HepG2 (cell line): ENCODE measurements at regions of chr11 and their contacts with region 1.

Region 1: GRCh38 chr11:44139565-44140330 is 44.3 kb downstream of the EXT2 start:
- DNase-seq: no peak
- ATAC-seq: no peak
- H3K4me3 ChIP-seq: no peak overlapping the region
- H3K27ac ChIP-seq: no peak overlapping the region
- H3K4me1 ChIP-seq: peaks cover 1% of the 10 kb centered on the region; the same call in 1 of the 2 replicates
- H3K27me3 ChIP-seq: no peaks in the 10 kb centered on the region
- CTCF ChIP-seq: no peak
- EP300 ChIP-seq: no peak
- POLR2A ChIP-seq: no peak
- RAD21 ChIP-seq: no peak

Region 2: GRCh38 chr11:44159848-44160721 is 20.3 kb after region 1 on chr11:
- CTCF ChIA-PET with region 1: no interaction called
- POLR2A ChIA-PET with region 1: no interaction called
- in situ Hi-C with region 1: no loop called
- intact Hi-C with region 1: no loop called
- DNase-seq: no peak
- ATAC-seq: no peak
- H3K4me3 ChIP-seq: no peak overlapping the region
- H3K27ac ChIP-seq: no peak overlapping the region
- H3K4me1 ChIP-seq: no peaks in the 10 kb centered on the region
- H3K27me3 ChIP-seq: no peaks in the 10 kb centered on the region
- CTCF ChIP-seq: no peak
- EP300 ChIP-seq: no peak
- POLR2A ChIP-seq: no peak
- RAD21 ChIP-seq: no peak

Region 3: DNA sequence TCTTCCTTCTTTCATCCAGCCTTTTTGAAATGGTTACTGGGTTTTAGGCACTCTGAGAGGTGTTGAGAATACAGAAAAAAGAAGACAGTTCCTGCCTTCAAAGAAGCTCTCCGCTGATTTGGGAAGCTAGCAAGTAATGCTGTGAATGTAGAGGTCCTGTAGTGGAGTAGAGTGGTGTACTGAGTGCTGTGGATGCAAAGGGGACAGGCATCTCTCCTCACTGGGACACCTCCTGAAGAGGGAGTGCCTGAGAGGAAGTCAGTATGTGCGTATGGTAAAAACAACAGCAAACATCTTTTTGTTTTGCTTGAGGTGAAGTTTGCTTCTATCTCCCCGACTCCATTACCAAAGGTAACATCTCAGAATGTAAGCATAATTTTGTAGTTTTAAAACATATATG is 33.2 kb after region 1 on chr11:
- CTCF ChIA-PET with region 1: no interaction called
- POLR2A ChIA-PET with region 1: no interaction called
- in situ Hi-C with region 1: no loop called
- intact Hi-C with region 1: loop called (anchors 2 kb)
- DNase-seq: no peak
- ATAC-seq: no peak
- H3K4me3 ChIP-seq: no peak overlapping the region
- H3K27ac ChIP-seq: no peak overlapping the region
- H3K4me1 ChIP-seq: no peaks in the 10 kb centered on the region
- H3K27me3 ChIP-seq: no peaks in the 10 kb centered on the region
- CTCF ChIP-seq: no peak
- EP300 ChIP-seq: no peak
- POLR2A ChIP-seq: no peak
- RAD21 ChIP-seq: no peak

Region 4: DNA sequence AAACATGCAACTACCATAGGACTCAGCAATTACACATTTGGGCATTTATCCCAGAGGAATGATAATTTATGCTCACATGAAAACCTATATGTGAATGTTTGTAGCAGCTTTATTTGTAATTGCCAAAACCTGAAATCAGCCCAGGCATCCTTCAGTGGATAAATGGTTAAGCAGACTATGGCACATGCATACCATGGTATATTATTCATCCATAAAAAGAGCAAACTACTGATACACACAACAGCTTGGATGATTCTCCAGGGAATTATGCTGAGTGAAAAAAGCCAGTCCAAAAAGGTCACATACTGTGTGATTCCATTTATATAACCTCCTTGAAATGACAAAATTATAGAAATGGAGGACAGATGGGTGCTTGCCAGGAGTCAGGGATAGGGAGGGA is 83.5 kb after region 1 on chr11:
- CTCF ChIA-PET with region 1: no interaction called
- POLR2A ChIA-PET with region 1: no interaction called
- in situ Hi-C with region 1: no loop called
- intact Hi-C with region 1: no loop called
- DNase-seq: no peak
- ATAC-seq: no peak
- H3K4me3 ChIP-seq: no peak overlapping the region
- H3K27ac ChIP-seq: no peak overlapping the region
- H3K4me1 ChIP-seq: no peaks in the 10 kb centered on the region
- H3K27me3 ChIP-seq: no peaks in the 10 kb centered on the region
- CTCF ChIP-seq: no peak
- EP300 ChIP-seq: no peak
- POLR2A ChIP-seq: no peak
- RAD21 ChIP-seq: no peak